Caco-2 (cell line): ENCODE measurements at regions of chr3 and their contacts with region 1.

Region 1: GRCh38 chr3:29280404-29281093 is at the start of gene RBMS3:
- DNase-seq: peak; percentile 79 to 82
- H3K4me3 ChIP-seq: peak within 1 kb of the TSS; percentile 19
- H3K4me3 Mint-ChIP-seq: peak within 1 kb of the TSS; percentile 69
- H3K27ac Mint-ChIP-seq: peak within 1 kb of the TSS; percentile 60
- H3K4me1 ChIP-seq: peaks cover 7% of the 10 kb centered on the region; the same call in 1 of the 2 replicates
- H3K4me1 Mint-ChIP-seq: peaks cover 33% of the 10 kb centered on the region
- H3K27me3 ChIP-seq: no peaks in the 10 kb centered on the region
- H3K27me3 Mint-ChIP-seq: no peaks in the 10 kb centered on the region
- CTCF ChIP-seq: peak in 1 of 2 experiments; percentile 32
- total RNA-seq, gene RBMS3: 7.4 and 9.2 TPM in 2 replicates

Region 2: DNA sequence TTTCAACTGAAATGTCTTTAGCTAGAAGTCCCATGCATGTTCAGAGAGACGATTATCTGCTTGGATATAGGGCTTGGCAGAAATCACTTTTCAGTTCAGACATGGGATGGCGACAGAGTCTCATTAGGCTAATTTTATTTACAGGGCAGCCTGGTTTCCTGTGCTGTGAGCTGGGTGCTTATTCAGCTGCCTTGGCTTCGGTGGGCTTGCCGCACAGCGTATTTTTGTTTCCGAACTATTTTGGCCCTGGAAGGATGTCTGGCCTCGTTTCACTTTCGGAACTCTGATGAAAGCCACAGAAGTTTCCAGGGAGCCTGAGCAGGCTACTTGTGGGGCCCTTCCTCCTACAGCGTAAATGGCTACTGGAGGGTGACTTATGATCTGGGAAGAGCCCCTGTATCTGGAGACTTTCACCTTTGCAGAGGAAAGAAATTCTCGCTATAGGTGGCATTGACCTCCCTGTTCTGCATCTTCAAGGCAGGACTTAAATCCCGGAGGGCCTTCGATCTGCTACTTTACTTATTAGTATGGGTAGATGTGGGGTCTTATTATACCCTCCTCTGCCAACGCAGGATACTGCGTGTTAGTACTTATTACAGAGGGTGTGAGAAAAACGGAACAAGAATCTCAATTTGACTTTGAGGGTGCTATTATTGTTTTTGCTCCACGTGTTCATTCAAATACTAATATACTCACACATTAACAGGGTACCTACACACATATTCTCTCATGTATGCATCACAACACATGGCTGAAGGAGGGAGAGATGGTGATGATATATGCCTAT is 363.6 kb before region 1 on chr3:
- CTCF ChIA-PET with region 1: no interaction called
- POLR2A ChIA-PET with region 1: no interaction called
- intact Hi-C with region 1: loop called (anchors 1 kb)
- DNase-seq: peak in 1 of 2 experiments; percentile 9
- H3K4me3 ChIP-seq: no peak overlapping the region
- H3K4me3 Mint-ChIP-seq: no peak overlapping the region
- H3K27ac Mint-ChIP-seq: no peak overlapping the region
- H3K4me1 ChIP-seq: 0 out of 2 replicates have a peak, but pooled peaks cover 4% of the 10 kb centered on the region
- H3K4me1 Mint-ChIP-seq: peaks cover 4% of the 10 kb centered on the region
- H3K27me3 ChIP-seq: no peaks in the 10 kb centered on the region
- H3K27me3 Mint-ChIP-seq: no peaks in the 10 kb centered on the region
- CTCF ChIP-seq: peak in 1 of 2 experiments; percentile 22

Region 3: DNA sequence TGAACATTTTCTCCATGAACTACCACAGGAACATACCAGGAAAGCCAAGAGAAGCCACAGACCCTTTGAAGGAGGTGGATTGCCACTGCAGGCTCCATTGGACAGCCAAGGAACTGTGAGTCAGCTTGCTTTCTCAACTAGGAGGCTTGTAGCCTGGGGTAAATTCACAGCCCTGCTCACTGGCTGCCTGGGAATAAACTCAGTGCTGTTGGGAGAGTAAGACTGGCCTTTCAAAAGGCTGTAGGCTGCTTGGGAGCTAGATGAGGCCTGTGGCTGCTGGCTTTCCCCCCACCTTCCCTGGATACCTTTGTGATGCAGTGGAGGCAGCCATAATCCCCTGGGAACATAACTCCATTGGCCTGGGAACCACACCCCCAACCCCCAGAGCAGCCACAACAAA is 223.2 kb before region 1 on chr3:
- CTCF ChIA-PET with region 1: no interaction called
- POLR2A ChIA-PET with region 1: no interaction called
- intact Hi-C with region 1: no loop called
- DNase-seq: no peak
- H3K4me3 ChIP-seq: no peak overlapping the region
- H3K4me3 Mint-ChIP-seq: no peak overlapping the region
- H3K27ac Mint-ChIP-seq: no peak overlapping the region
- H3K4me1 ChIP-seq: no peaks in the 10 kb centered on the region
- H3K4me1 Mint-ChIP-seq: no peaks in the 10 kb centered on the region
- H3K27me3 ChIP-seq: no peaks in the 10 kb centered on the region
- H3K27me3 Mint-ChIP-seq: no peaks in the 10 kb centered on the region
- CTCF ChIP-seq: no peak

Region 4: DNA sequence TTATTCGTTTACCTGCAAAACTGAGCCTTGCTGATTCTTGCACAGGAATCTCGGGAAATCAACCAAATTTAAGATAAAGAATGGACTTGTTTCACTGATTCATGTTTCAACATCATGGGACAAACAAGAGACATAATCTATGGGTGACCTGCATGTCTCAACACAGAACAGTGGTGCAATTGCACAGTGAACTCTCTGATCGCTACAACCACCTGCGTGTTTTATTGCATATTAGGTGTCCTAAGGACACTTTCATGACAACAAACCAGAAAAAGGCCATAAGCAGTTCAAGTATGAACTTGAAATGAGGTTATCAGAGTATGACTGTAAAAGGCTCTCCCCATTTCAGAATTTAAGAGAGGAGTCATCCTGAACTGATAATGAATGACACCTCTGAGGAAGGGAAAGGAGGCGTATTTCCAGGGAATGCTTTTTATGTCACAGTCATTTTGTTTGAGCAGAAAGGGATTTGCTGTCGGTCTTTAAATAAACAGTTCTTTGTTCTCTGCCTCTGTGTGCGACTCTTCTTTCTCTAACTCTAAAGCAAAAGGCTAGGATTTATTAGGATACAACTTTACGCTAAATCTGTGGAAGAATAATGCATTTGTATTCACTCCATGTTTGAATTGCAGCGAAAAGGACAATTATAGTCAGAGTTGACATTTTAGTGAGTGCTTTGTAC is 167.5 kb after region 1 on chr3:
- CTCF ChIA-PET with region 1: no interaction called
- POLR2A ChIA-PET with region 1: no interaction called
- intact Hi-C with region 1: no loop called
- DNase-seq: peak in 1 of 2 experiments; percentile 14
- H3K4me3 ChIP-seq: no peak overlapping the region
- H3K4me3 Mint-ChIP-seq: no peak overlapping the region
- H3K27ac Mint-ChIP-seq: no peak overlapping the region
- H3K4me1 ChIP-seq: 0 out of 2 replicates have a peak, but pooled peaks cover 2% of the 10 kb centered on the region
- H3K4me1 Mint-ChIP-seq: peaks cover 5% of the 10 kb centered on the region
- H3K27me3 ChIP-seq: no peaks in the 10 kb centered on the region
- H3K27me3 Mint-ChIP-seq: no peaks in the 10 kb centered on the region
- CTCF ChIP-seq: no peak

Region 5: DNA sequence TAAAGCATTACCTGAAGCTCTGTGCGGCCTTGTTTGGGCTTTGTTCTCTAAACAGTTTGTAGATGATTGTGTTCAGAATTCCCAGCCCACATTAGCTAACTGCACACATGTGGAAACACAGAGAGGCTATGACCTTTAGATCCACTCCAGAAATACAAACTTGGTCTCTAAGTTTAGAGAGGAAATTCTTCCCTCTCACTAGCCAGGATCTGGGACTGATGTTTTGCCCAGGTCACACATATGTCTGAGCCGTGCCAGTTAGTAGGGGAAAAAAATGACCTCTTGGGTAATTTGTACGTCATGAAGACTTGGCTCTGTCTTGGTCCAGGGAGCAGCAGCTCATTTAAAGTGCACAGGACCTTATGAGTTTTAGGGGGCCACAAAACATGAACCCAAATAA is 223.4 kb after region 1 on chr3:
- CTCF ChIA-PET with region 1: no interaction called
- POLR2A ChIA-PET with region 1: no interaction called
- intact Hi-C with region 1: loop called (anchors 5 kb)
- DNase-seq: no peak
- H3K4me3 ChIP-seq: no peak overlapping the region
- H3K4me3 Mint-ChIP-seq: no peak overlapping the region
- H3K27ac Mint-ChIP-seq: peak overlapping the region; percentile 74
- H3K4me1 ChIP-seq: peaks cover 17% of the 10 kb centered on the region; the same call in 1 of the 2 replicates
- H3K4me1 Mint-ChIP-seq: peaks cover 42% of the 10 kb centered on the region
- H3K27me3 ChIP-seq: no peaks in the 10 kb centered on the region
- H3K27me3 Mint-ChIP-seq: no peaks in the 10 kb centered on the region
- CTCF ChIP-seq: no peak

Region 6: DNA sequence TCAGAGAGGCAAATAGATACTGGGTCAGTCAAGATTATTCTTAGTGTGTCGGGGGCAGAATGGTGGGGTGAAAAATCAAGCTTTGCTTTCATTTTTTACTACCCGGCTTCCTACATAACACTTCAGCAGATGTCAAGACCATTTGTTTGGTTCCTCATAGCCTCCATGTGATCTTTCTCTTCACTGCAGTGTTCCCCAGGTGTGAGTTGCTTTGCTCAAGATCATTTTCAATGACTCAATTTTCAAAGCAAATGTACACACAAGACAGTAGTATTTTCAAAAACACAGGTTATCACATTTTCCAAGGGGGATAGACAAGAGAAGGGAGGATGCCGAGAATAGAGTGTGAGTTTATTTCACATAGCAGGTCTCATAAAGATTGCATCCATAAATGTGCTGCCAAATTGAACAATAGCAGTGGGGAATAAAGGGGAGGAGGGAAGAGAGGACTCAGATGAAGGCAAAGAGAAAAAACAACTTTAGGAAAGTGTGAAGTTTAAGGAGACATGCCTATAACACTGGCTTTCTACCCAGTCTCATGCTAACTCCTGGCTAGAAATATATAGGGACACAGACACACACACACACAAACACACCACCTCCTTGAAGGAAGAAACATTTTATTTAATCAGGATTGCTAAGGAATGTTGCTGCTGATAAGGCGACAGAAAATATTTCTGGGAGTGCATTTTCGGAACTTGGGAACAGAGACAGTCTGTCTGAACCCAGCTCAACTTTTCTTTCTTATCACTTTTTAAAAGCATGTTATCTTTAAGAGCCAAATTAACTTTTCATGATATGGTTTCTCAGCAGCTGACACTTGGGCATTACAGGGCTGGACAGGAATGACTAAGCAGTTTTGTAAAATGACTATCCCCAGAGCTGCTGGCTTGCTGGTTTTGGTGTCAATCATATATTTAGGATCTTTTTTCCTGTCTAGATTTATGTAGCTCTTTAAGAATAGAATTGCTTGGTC is 402.8 kb after region 1 on chr3:
- CTCF ChIA-PET with region 1: no interaction called
- POLR2A ChIA-PET with region 1: no interaction called
- intact Hi-C with region 1: loop called (anchors 5 kb)
- DNase-seq: peak; percentile 71 to 72
- H3K4me3 ChIP-seq: no peak overlapping the region
- H3K4me3 Mint-ChIP-seq: peak overlapping the region; percentile 3
- H3K27ac Mint-ChIP-seq: peak overlapping the region; percentile 66
- H3K4me1 ChIP-seq: peaks cover 57% of the 10 kb centered on the region
- H3K4me1 Mint-ChIP-seq: peaks cover 24% of the 10 kb centered on the region
- H3K27me3 ChIP-seq: no peaks in the 10 kb centered on the region
- H3K27me3 Mint-ChIP-seq: no peaks in the 10 kb centered on the region
- CTCF ChIP-seq: no peak

Region 7: GRCh38 chr3:29764603-29765254 is 484.2 kb after region 1 on chr3:
- CTCF ChIA-PET with region 1: interaction called, 3 read pairs
- POLR2A ChIA-PET with region 1: no interaction called
- intact Hi-C with region 1: loop called (anchors 1 kb)
- DNase-seq: peak in 1 of 2 experiments; percentile 7
- H3K4me3 ChIP-seq: no peak overlapping the region
- H3K4me3 Mint-ChIP-seq: no peak overlapping the region
- H3K27ac Mint-ChIP-seq: no peak overlapping the region
- H3K4me1 ChIP-seq: no peaks in the 10 kb centered on the region
- H3K4me1 Mint-ChIP-seq: no peaks in the 10 kb centered on the region
- H3K27me3 ChIP-seq: no peaks in the 10 kb centered on the region
- H3K27me3 Mint-ChIP-seq: no peaks in the 10 kb centered on the region
- CTCF ChIP-seq: peak; percentile 22 to 36